OCI-LY7 (cell line): ENCODE measurements at regions of chr11 and their contacts with region 1.

Region 1: GRCh38 chr11:64778508-64779346 is at the start of gene SF1:
- DNase-seq: peak; percentile 100
- H3K4me3 ChIP-seq: peak within 1 kb of the TSS; percentile 99
- H3K27ac ChIP-seq: peak within 1 kb of the TSS; percentile 91
- H3K4me1 ChIP-seq: peaks cover 67% of the 10 kb centered on the region
- CTCF ChIP-seq: 0 out of 2 replicates have a peak, but pooled peaks have one; percentile 13
- total RNA-seq, gene SF1: 247 and 261 TPM in 2 replicates

Region 2: GRCh38 chr11:64703048-64703447 is 75.7 kb before region 1 on chr11:
- CTCF ChIA-PET with region 1: no interaction called
- POLR2A ChIA-PET with region 1: no interaction called
- intact Hi-C with region 1: no loop called
- DNase-seq: no peak
- H3K4me3 ChIP-seq: no peak overlapping the region
- H3K27ac ChIP-seq: no peak overlapping the region
- H3K4me1 ChIP-seq: no peaks in the 10 kb centered on the region
- CTCF ChIP-seq: no peak

Region 3: DNA sequence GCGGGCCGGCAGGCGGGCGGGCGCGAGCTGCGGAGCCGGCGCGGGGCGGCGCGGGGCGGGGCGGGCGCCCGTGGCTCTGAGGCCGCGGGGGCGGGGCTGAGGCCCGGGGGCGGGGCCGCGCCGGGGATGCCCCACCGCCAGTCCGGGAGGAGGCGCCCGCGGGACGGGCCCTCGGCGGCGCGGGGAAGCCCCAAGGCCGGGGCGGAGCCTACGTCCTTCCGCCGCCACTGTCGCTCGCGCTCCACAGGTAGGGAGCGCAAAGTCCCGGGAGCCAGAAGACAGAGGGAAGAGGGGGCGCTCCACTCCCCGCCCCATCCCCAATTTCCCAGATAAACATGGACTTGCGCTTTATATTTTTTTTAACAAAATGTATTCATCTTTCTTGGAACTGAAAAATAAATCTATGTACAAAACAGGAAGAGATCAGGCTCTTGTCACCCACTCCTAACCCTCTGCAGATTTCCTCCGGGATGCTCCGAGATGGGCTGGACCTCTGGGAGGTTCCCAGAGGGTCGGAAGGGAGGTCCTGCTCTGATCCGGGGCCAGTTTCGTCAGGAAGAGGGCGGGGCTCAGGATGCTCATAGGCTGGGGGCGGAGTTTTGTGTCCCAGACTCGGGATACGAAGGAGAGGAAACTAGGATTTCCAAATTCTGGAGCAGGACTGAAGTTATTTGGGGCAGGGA is 24.6 kb after region 1 on chr11 and contains the start of gene MAP4K2:
- CTCF ChIA-PET with region 1: interaction called, 3 read pairs
- POLR2A ChIA-PET with region 1: interaction called, 5 read pairs
- intact Hi-C with region 1: loop called (anchors 2 kb)
- DNase-seq: peak; percentile 91
- H3K4me3 ChIP-seq: peak within 1 kb of the TSS; percentile 78
- H3K27ac ChIP-seq: peak within 1 kb of the TSS; percentile 82
- H3K4me1 ChIP-seq: peaks cover 50% of the 10 kb centered on the region
- CTCF ChIP-seq: peak; percentile 61; the same call in 1 of the 2 replicates
- total RNA-seq, gene MAP4K2: 109 and 115 TPM in 2 replicates

Region 4: GRCh38 chr11:64878494-64879243 is 99.9 kb after region 1 on chr11 and contains the start of gene EHD1:
- CTCF ChIA-PET with region 1: no interaction called
- POLR2A ChIA-PET with region 1: interaction called, 8 read pairs
- intact Hi-C with region 1: loop called (anchors 2 kb)
- DNase-seq: peak; percentile 100
- H3K4me3 ChIP-seq: peak within 1 kb of the TSS; percentile 89
- H3K27ac ChIP-seq: peak within 1 kb of the TSS; percentile 97
- H3K4me1 ChIP-seq: peaks cover 76% of the 10 kb centered on the region
- CTCF ChIP-seq: peak; percentile 72
- total RNA-seq, gene EHD1: 101 and 107 TPM in 2 replicates

Region 5: DNA sequence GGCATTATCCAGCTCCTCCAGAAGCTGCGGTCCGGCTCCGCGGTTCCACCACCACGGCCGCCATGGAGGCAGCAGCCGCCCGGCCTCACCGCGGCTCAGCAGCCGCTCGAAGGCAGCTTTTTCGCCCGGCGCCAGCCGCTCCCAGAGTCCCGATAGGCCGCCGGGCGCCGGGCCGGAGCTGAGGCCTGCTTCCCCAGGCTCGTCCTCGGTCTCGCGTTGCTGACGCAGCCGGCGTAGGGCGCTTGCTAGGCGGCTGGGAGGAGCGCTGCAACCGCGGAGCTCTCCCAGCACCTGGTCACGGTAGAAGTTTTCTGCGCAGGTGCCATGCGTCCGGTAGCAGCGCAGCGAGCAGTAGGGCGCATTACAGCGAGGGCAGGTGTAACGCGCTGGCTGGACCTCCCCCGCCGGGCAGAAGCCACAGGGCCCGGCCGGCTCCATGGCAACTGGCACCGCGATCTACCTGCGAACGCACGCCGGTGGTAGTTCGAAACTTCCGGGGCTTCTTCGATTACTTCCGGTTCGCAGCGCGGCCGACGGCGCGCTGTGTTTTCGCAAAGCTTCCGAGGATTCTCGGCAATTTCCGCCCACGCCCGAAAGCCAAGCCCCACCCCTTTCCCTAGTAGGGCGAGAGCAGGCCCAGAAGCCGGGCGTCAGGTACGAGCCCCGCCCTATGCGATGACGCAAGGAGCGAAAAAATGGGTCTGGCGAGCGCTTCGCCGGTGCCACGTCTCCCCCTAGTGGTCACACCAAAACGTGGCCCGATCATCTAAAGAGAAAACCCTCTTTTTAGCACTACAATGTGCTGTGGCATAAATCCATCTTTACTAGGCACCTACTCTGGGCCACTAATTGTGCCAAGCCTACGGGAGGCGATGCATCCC is 338.7 kb after region 1 on chr11 and contains the start of gene ZNHIT2:
- CTCF ChIA-PET with region 1: no interaction called
- POLR2A ChIA-PET with region 1: no interaction called
- intact Hi-C with region 1: loop called (anchors 10 kb)
- DNase-seq: peak; percentile 100
- H3K4me3 ChIP-seq: peak within 1 kb of the TSS; percentile 81
- H3K27ac ChIP-seq: peak within 1 kb of the TSS; percentile 78
- H3K4me1 ChIP-seq: peaks cover 62% of the 10 kb centered on the region
- CTCF ChIP-seq: peak; percentile 92
- total RNA-seq, gene ZNHIT2: 29.9 and 32.4 TPM in 2 replicates